Panc1 (cell line): ENCODE measurements at regions of chr10 and their contacts with region 1.

Region 1: DNA sequence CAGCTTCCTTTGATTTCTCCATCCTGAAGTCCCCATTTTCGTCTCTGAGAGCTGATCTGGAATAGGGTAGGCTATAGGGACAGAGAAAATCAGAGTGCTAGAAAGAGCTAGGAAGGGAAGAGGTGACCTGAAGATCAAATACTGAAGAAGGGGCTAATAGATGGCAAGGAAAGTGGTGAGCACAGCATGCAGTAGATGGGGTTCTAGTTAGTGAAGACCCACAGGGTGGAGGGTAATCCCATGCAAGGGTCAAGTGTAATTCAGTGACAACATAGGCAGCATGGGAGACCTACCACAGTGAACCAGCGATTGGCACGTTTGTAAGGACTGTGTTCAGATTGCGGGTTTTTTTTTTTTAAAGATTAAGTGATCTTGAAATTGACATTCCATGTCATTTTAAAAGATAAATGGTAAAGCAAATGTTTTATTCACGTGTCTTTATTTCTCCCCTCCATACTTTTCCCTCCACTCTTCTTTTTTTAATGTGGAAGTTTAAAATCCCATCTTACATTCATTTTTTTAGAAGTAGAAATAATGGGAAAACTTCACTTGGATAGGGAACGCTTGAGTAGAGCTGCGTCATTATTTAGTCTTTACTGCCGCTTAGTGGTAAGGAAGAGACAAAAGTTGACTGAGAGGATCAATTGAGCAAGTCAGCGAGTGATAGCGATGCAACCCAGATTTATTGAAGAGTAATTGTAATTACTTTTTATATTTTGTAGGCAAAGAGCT is 21.0 kb upstream of the ABI1 start:
- DNase-seq: no peak
- ATAC-seq: peak; percentile 90
- H3K4me3 ChIP-seq: peak overlapping the region in 1 of 2 experiments; percentile 10; a peak in 1 of 4 replicates
- H3K27ac ChIP-seq: no peak overlapping the region
- H3K4me1 ChIP-seq: 0 out of 2 replicates have a peak, but pooled peaks cover 3% of the 10 kb centered on the region
- H3K27me3 ChIP-seq: no peaks in the 10 kb centered on the region
- CTCF ChIP-seq: peak; percentile 74

Region 2: GRCh38 chr10:26334932-26335573 is 546.7 kb before region 1 on chr10:
- CTCF ChIA-PET with region 1: interaction called, 3 read pairs
- POLR2A ChIA-PET with region 1: no interaction called
- in situ Hi-C with region 1: no loop called
- intact Hi-C with region 1: loop called (anchors 10 kb)
- DNase-seq: peak; percentile 60
- ATAC-seq: peak; percentile 76; the same call in 1 of the 2 replicates
- H3K4me3 ChIP-seq: peak overlapping the region in 1 of 2 experiments; percentile 29; a peak in 2 of 4 replicates
- H3K27ac ChIP-seq: no peak overlapping the region
- H3K4me1 ChIP-seq: no peaks in the 10 kb centered on the region
- H3K27me3 ChIP-seq: no peaks in the 10 kb centered on the region
- CTCF ChIP-seq: peak; percentile 70

Region 3: GRCh38 chr10:26612151-26612915 is 269.4 kb before region 1 on chr10:
- CTCF ChIA-PET with region 1: interaction called, 13 read pairs
- POLR2A ChIA-PET with region 1: no interaction called
- in situ Hi-C with region 1: no loop called
- intact Hi-C with region 1: loop called (anchors 5 kb)
- DNase-seq: no peak
- ATAC-seq: no peak
- H3K4me3 ChIP-seq: no peak overlapping the region
- H3K27ac ChIP-seq: no peak overlapping the region
- H3K4me1 ChIP-seq: no peaks in the 10 kb centered on the region
- H3K27me3 ChIP-seq: no peaks in the 10 kb centered on the region
- CTCF ChIP-seq: no peak

Region 4: GRCh38 chr10:26682931-26683330 is 198.8 kb before region 1 on chr10:
- CTCF ChIA-PET with region 1: no interaction called
- POLR2A ChIA-PET with region 1: no interaction called
- in situ Hi-C with region 1: no loop called
- intact Hi-C with region 1: loop called (anchors 5 kb)
- DNase-seq: no peak
- ATAC-seq: no peak
- H3K4me3 ChIP-seq: no peak overlapping the region
- H3K27ac ChIP-seq: no peak overlapping the region
- H3K4me1 ChIP-seq: no peaks in the 10 kb centered on the region
- H3K27me3 ChIP-seq: no peaks in the 10 kb centered on the region
- CTCF ChIP-seq: no peak

Region 5: GRCh38 chr10:26725837-26726727 is 155.7 kb before region 1 on chr10:
- CTCF ChIA-PET with region 1: interaction called, 9 read pairs
- POLR2A ChIA-PET with region 1: no interaction called
- in situ Hi-C with region 1: no loop called
- intact Hi-C with region 1: loop called (anchors 2 kb)
- DNase-seq: peak; percentile 24
- ATAC-seq: no peak
- H3K4me3 ChIP-seq: no peak overlapping the region
- H3K27ac ChIP-seq: no peak overlapping the region
- H3K4me1 ChIP-seq: no peaks in the 10 kb centered on the region
- H3K27me3 ChIP-seq: no peaks in the 10 kb centered on the region
- CTCF ChIP-seq: peak; percentile 75